Mammary epithelial cell (primary cell): ENCODE measurements at regions of chr11 and their contacts with region 1.

Region 1: DNA sequence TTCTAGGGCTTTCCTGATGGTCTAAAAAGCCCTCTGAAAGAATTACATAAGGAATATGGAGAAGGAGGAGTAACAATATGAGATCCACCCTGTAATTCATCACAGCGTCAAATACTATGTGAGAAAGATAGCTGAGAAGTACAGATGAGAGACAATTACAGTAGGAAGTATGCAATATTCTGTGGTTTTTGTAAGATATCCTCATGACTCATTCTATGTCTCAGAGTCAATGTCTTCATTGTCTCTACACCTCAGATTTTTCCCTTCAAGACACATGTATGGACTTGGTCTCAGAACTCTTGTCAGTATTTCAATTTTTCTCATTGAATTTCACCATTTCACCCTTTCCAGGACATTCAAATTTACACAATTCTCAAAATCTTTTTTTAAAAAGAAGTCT is 343.3 kb upstream of the CTSC start:
- DNase-seq: peak; percentile 92
- H3K4me3 ChIP-seq: no peak overlapping the region
- H3K27ac ChIP-seq: peak overlapping the region; percentile 68
- H3K4me1 ChIP-seq: peaks cover 9% of the 10 kb centered on the region
- H3K27me3 ChIP-seq: no peaks in the 10 kb centered on the region
- CTCF ChIP-seq: no peak

Region 2: GRCh38 chr11:88103337-88104206 is 577.2 kb before region 1 on chr11:
- CTCF ChIA-PET with region 1: no interaction called
- dilution Hi-C with region 1: no loop called
- in situ Hi-C with region 1: no loop called
- intact Hi-C with region 1: loop called (anchors 2 kb)
- DNase-seq: peak; percentile 47
- H3K4me3 ChIP-seq: no peak overlapping the region
- H3K27ac ChIP-seq: peak overlapping the region; percentile 54
- H3K4me1 ChIP-seq: peaks cover 14% of the 10 kb centered on the region
- H3K27me3 ChIP-seq: no peaks in the 10 kb centered on the region
- CTCF ChIP-seq: peak; percentile 63 to 81